HEK293T (cell line): ENCODE measurements at regions of chr17 and their contacts with region 1.

Region 1: DNA sequence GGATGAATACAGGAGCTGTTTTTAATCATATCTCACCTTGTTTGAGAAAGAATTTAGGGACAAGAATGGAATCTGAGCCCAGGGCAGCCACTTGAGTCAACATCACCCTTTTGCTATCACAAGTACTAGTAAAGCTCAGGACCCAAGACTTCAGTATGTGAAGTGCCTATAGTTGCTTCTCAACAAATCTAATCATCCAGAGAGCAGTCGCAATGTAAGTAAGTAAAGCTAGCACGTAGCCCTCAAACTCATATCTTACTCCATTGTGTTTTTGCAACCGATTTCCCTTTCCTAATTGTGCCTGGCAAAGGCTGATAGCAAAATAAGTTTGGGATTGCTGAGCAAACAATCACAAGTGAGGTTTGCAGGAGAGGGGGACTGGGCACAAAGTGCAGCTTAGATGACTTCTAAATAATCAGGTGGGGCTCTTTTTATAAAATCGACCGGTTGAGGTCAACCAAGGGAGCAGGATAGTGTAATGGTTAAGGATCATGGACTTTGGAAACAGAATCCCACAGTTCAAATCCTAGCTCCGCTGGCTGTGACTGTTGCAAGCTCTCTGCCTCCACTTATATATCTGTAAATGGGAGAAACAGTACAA is 13.0 kb downstream of the TOB1 start:
- DNase-seq: no peak

Region 2: DNA sequence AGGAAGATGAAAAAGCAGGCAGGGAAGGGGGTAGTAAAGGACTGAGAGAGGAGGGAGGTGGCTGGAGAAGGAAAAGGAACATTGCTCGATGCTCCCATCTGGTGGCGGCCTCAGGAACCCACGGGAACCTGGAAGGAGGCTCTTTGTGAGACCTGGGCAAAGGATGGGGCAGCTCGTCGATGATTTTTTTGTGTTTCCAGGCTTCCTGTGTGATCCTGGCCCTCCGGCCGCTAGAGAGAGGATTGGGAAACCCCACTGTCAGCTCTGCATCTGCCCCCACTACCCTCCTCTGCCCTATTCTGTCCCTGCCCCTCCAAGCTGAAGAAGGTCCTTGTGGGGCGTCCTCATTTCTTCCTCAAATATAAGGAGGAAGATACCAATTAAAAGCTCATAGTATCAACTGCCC is 11.2 kb before region 1 on chr17:
- CTCF ChIA-PET with region 1: interaction called, 26 read pairs
- POLR2A ChIA-PET with region 1: no interaction called
- DNase-seq: peak; percentile 87

Region 3: GRCh38 chr17:50931144-50931908 is 78.2 kb after region 1 on chr17:
- CTCF ChIA-PET with region 1: interaction called, 10 read pairs
- POLR2A ChIA-PET with region 1: no interaction called
- DNase-seq: peak; percentile 74

Region 4: DNA sequence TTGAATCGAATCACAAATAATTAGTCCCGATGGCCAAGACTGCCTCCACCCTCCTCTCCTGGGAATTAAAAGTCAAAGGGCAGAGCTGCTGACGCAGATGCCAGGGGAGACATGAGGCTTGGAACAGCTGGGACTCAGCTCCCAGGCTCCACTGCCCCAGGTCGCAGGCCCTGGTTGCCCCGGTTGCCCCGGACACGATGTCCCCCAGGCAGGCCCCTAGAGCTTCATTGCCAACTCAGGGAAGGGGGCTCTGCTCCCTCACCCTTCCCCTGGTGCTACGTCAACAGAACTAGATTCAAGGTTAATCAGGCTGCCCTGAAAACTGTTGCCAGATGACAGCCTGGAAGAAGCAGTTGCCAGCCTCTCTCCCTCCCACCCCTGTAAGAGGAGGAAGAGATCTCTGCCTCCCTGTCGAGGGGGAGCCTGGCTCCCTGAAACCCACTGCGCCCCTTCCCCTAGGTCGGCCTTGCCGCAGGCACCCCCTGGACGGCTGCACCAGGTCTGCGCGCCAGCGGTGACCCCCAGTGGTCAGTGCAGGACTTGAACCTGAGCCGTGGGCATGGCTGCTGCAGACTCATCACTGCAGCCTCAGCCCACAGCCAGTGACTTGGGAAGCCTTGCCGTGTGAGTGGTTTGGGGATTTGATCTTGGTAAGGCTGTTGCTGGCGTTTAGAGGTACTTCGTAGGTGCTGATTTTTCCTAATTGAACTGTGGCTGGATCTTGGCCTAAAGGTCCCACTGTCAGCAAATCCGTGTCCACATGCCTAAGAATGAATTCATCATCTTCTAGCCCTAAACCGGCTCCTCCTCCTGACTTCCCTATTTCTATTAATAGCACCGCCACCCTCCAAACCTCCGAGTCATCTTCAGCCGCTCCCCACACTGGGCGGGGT is 97.1 kb after region 1 on chr17:
- CTCF ChIA-PET with region 1: interaction called, 62 read pairs
- POLR2A ChIA-PET with region 1: interaction called, 8 read pairs
- DNase-seq: peak; percentile 62

Region 5: GRCh38 chr17:50956750-50957523 is 103.8 kb after region 1 on chr17:
- CTCF ChIA-PET with region 1: interaction called, 40 read pairs
- POLR2A ChIA-PET with region 1: interaction called, 5 read pairs
- DNase-seq: peak; percentile 83